ENCODE measurements at regions of chr14 and their contacts with region 1.

Region 1: GRCh38 chr14:77198561-77198960 is 17.0 kb downstream of the TMEM63C start:
- DNase-seq: no peak
- ATAC-seq: no peak
- H3K4me3 ChIP-seq: no peak overlapping the region
- H3K27ac ChIP-seq: no peak overlapping the region
- H3K4me1 ChIP-seq: no peaks in the 10 kb centered on the region
- CTCF ChIP-seq: no peak
- EP300 ChIP-seq: no peak
- POLR2A ChIP-seq: no peak
- RAD21 ChIP-seq: no peak

Region 2: DNA sequence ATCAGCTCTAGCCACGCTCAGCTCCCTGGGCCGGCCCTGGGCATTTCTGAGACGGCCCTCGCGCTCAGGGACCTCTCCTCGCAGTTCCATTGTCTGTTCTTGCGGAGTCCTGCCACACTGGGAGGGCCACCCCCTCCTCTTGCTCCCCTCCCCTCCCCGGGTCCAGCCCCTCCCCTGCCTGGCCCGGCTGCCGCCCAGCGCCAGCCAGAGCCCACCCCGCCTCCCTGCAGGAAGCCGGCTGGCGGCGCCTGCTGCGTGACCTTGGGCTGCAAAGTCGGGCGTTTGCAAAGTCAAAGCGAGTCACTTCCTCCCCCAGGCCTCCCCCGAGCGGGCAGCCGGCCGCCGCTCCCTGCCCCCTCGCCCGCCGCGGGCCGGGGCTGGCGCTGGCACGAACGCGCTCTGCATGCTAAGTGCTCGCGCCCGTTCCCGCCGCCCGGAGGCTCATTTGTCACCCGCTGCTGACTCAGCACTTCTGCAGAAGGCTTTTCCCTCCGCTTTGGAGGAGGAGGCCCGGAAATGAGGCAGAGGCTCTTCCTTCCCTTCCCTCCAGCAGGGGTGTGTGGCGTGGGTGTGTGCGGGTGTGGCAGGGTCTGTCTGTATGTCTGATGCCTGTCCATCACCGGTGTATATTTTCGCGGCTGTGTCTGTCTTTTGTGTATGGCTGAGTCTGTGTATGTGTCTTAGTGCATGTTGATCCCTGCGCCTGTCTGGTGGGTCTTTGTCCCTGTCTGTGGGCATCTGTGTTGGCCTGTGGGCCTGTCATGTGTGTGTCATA is 242.1 kb before region 1 on chr14:
- CTCF ChIA-PET with region 1: no interaction called
- POLR2A ChIA-PET with region 1: no interaction called
- DNase-seq: peak; percentile 66 to 97
- ATAC-seq: peak; percentile 65 to 66
- H3K4me3 ChIP-seq: peak overlapping the region; percentile 30
- H3K27ac ChIP-seq: peak overlapping the region; percentile 96 to 100
- H3K4me1 ChIP-seq: peaks cover 91% of the 10 kb centered on the region
- CTCF ChIP-seq: no peak
- EP300 ChIP-seq: peak; percentile 85 to 95; a peak in 4 of 5 replicates
- POLR2A ChIP-seq: peak; percentile 29
- RAD21 ChIP-seq: peak; percentile 34 to 73; a peak in 4 of 5 replicates

Region 3: GRCh38 chr14:77170045-77170444 is 28.5 kb before region 1 on chr14:
- CTCF ChIA-PET with region 1: no interaction called
- POLR2A ChIA-PET with region 1: no interaction called
- DNase-seq: no peak
- ATAC-seq: no peak
- H3K4me3 ChIP-seq: no peak overlapping the region
- H3K27ac ChIP-seq: no peak overlapping the region
- H3K4me1 ChIP-seq: no peaks in the 10 kb centered on the region
- CTCF ChIP-seq: no peak
- EP300 ChIP-seq: no peak
- POLR2A ChIP-seq: no peak
- RAD21 ChIP-seq: no peak

Region 4: DNA sequence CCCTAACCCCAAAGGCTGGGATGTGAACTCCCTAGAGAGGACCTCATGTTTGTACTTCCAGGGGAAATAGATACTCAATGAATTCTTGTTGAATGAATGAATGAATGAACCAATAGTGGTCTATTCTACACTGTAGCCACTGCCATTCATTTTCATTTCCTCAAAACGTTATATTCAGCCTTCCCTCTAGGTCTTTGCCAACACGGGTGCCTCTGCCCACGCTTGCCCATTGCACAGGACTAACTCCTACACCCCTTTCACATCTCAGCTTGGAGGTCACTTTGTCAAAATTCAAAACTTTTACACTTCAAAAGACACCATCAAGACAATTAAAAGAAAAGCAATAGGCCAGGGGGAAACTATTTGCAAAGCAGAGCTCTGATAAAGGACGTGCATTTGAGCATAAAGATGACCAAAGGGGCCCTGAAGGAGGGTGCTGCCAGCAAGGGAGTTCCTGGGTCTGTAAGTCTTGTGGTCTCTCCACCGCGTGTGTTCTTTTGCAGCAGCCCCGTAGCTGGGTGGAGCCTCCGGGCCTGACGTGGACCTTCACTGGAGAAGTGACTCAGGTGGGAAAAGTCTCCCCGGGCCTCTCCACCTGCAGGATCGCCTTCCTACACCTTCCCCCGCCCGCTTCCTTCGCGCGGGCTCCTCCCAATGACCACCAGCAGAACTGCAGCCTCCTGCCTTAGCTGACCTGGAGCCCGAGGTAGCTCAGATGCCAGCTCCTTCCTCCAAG is 14.6 kb after region 1 on chr14:
- CTCF ChIA-PET with region 1: interaction called, 10 read pairs
- POLR2A ChIA-PET with region 1: no interaction called
- DNase-seq: peak; percentile 45 to 72
- ATAC-seq: peak; percentile 88 to 96
- H3K4me3 ChIP-seq: no peak overlapping the region
- H3K27ac ChIP-seq: no peak overlapping the region
- H3K4me1 ChIP-seq: no peaks in the 10 kb centered on the region
- CTCF ChIP-seq: peak; percentile 47
- EP300 ChIP-seq: no peak
- POLR2A ChIP-seq: no peak
- RAD21 ChIP-seq: peak; percentile 58 to 68

Measured in A549 (cell line).